ENCODE measurements at regions of chr15 and their contacts with region 1.

Region 1: DNA sequence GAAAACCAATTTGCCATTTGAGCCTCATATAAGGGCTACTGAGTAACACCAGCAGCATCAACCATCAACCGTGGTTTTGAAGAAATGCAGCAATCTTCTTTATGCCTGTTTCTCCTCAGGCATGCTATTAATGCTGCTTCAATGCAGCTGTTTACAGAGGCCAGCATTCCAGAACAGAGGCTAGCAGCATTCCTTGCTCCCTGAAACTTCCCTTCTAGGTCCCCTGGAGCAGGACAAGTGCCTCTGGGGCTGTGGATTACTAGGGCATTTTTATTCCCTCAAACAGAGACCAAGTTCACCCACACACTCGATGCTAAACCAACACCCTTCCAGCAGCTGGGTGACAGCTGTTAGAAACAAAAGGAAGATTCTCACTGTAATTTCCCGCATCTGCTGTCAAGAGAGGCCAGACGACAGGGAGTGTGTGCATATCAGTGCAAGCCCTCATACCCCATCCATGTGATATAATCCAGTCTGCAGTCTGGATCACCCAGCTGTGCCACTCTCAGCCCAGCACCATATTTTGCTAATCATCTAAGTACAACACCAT is 57.5 kb downstream of the HOMER2 start:
- DNase-seq: no peak
- H3K4me3 Mint-ChIP-seq: no peak overlapping the region
- H3K27ac Mint-ChIP-seq: no peak overlapping the region
- H3K4me1 Mint-ChIP-seq: no peaks in the 10 kb centered on the region
- H3K27me3 Mint-ChIP-seq: no peaks in the 10 kb centered on the region
- CTCF ChIP-seq: no peak

Region 2: GRCh38 chr15:82625136-82625535 is 269.9 kb before region 1 on chr15:
- CTCF ChIA-PET with region 1: no interaction called
- intact Hi-C with region 1: no loop called
- DNase-seq: no peak
- H3K4me3 Mint-ChIP-seq: no peak overlapping the region
- H3K27ac Mint-ChIP-seq: no peak overlapping the region
- H3K4me1 Mint-ChIP-seq: peaks cover 10% of the 10 kb centered on the region
- H3K27me3 Mint-ChIP-seq: no peaks in the 10 kb centered on the region
- CTCF ChIP-seq: no peak

Region 3: GRCh38 chr15:82832601-82833361 is 62.3 kb before region 1 on chr15:
- CTCF ChIA-PET with region 1: no interaction called
- intact Hi-C with region 1: no loop called
- DNase-seq: peak; percentile 41
- H3K4me3 Mint-ChIP-seq: peak overlapping the region; percentile 31
- H3K27ac Mint-ChIP-seq: peak overlapping the region; percentile 82
- H3K4me1 Mint-ChIP-seq: peaks cover 25% of the 10 kb centered on the region
- H3K27me3 Mint-ChIP-seq: no peaks in the 10 kb centered on the region
- CTCF ChIP-seq: no peak

Region 4: DNA sequence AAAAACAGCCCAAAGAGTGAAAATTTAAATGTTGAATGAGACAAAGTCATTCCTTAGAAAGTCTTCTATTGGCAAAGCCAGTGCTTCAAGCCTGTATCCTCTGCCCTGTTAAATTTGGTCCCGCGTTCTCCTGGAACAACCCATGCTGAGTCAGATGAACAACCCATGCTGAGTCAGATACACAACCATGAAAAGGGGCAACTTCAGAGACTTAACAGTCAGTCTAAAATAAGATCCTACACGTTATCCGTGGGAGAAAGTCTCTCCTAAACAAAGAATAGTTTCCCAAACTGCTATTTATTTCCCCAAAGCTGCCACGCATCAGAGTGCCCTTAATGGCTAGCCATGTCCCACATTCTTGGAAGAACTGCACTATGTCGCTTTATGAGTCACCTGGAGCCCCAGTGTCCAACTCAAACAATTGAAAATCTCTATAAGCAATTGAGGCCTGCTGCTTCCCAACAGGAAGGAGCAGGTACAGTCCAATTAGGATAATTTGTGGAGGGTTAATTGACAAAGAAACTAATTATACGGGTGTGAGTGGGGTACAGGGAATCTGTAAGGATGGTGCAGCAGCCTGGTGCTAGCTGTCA is 19.5 kb before region 1 on chr15:
- CTCF ChIA-PET with region 1: no interaction called
- intact Hi-C with region 1: loop called (anchors 1 kb)
- DNase-seq: no peak
- H3K4me3 Mint-ChIP-seq: no peak overlapping the region
- H3K27ac Mint-ChIP-seq: no peak overlapping the region
- H3K4me1 Mint-ChIP-seq: no peaks in the 10 kb centered on the region
- H3K27me3 Mint-ChIP-seq: no peaks in the 10 kb centered on the region
- CTCF ChIP-seq: no peak